Aorta (tissue), 5 donors: ENCODE measurements at regions of chr6 and their contacts with region 1.

Region 1: GRCh38 chr6:17156112-17156921 is 54.5 kb downstream of the STMND1 start:
- DNase-seq: no peak
- ATAC-seq: peak; percentile 63
- H3K4me3 ChIP-seq: no peak overlapping the region
- H3K27ac ChIP-seq: no peak overlapping the region
- H3K4me1 ChIP-seq: no peaks in the 10 kb centered on the region
- H3K27me3 ChIP-seq: no peaks in the 10 kb centered on the region

Region 2: GRCh38 chr6:17429383-17430061 is 273.2 kb after region 1 on chr6:
- intact Hi-C with region 1: no loop called
- DNase-seq: no peak
- ATAC-seq: no peak
- H3K4me3 ChIP-seq: no peak overlapping the region
- H3K27ac ChIP-seq: no peak overlapping the region
- H3K4me1 ChIP-seq: no peaks in the 10 kb centered on the region
- H3K27me3 ChIP-seq: no peaks in the 10 kb centered on the region

Region 3: GRCh38 chr6:17584241-17584803 is 428.0 kb after region 1 on chr6:
- intact Hi-C with region 1: loop called (anchors 2 kb)
- DNase-seq: no peak
- ATAC-seq: peak; percentile 93
- H3K4me3 ChIP-seq: no peak overlapping the region
- H3K27ac ChIP-seq: peak overlapping the region in 1 of 2 donors; percentile 57
- H3K4me1 ChIP-seq: no peaks in the 10 kb centered on the region
- H3K27me3 ChIP-seq: no peaks in the 10 kb centered on the region

Region 4: DNA sequence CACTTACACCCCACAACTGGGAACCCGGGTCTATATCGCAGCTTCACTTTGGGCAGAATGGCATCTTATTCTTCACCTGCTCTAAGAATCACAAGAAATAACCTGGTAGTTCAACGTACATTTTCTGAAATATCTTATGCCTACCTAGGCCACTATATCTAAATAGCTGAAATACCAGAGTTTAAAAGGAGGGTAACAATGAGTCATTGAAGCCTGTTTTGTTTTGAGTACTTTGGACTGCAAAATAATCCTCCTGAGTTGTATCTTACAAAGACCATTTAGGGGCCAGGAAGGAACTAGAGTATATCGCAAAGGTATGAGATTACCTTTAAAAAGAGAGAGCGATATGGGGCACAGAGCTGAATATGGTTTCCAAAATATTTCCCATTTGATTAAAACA is 647.1 kb after region 1 on chr6:
- intact Hi-C with region 1: loop called (anchors 5 to 10 kb)
- DNase-seq: no peak
- ATAC-seq: no peak
- H3K4me3 ChIP-seq: no peak overlapping the region
- H3K27ac ChIP-seq: no peak overlapping the region
- H3K4me1 ChIP-seq: no peaks in the 10 kb centered on the region
- H3K27me3 ChIP-seq: no peaks in the 10 kb centered on the region

Region 5: DNA sequence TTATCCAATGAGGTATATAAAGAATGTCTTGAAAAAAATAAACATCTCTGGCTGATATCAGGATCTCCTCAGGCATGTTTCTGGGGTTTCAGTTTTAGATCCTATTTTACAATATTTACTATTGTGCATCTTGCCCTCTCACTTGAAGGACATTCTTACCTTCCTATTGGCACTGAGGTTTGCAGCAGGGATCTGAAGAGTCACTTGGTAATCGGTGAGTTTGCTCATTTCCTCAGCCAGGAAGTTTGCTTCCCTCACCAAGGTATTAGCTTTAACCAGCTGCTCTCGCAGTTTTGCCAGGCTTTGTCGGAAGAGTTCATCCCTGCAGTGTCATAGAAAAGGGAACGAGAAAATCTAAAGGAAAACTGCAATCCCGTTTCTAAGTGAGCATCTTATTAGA is 652.3 kb after region 1 on chr6:
- intact Hi-C with region 1: loop called (anchors 5 to 10 kb)
- DNase-seq: no peak
- ATAC-seq: no peak
- H3K4me3 ChIP-seq: no peak overlapping the region
- H3K27ac ChIP-seq: no peak overlapping the region
- H3K4me1 ChIP-seq: no peaks in the 10 kb centered on the region
- H3K27me3 ChIP-seq: no peaks in the 10 kb centered on the region